ENCODE measurements at regions of chr7 and their contacts with region 1.

Region 1: DNA sequence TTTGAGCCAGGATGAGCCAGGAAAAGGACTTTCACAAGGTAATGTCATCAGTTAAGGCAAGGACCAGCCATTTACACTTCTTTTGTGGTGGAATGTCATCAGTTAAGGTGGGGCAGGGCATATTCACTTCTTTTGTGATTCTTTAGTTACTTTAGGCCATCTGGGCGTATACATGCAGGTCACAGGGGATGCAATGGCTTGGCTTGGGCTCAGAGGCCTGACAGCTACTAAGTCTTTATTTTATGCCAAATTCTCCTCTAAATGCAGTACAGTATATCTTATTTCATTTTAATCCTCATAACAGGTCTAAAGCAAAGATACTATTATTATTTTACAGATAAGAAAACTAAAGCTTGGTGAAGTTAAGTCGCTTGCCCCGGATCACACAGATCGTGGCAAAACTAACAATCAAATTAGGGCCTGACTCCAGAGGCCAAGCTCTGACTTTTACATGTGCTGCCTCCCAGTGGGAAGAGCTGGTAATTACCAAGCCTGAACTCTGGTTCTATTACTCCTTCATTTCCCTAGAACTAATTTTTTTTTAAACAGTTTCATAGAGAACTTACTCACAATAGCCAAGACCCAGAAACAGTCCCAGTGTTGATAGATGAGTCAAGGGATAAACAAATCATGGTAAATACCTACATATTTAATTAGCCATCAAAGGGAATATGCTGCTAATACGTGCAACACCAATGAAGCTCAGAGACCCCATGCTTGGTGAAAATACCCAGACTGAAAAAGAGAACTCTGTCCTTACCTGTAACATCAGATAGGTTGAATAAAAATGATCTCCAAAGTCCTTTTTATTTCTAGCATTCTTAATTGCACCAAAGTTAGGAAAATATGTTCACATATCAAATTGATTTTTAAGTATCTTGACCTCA is 35.4 kb downstream of the C7orf25 start:
- DNase-seq: peak; percentile 67
- ATAC-seq: peak; percentile 60
- H3K4me3 Mint-ChIP-seq: no peak overlapping the region
- H3K27ac Mint-ChIP-seq: no peak overlapping the region
- H3K4me1 Mint-ChIP-seq: no peaks in the 10 kb centered on the region
- H3K27me3 Mint-ChIP-seq: peaks cover 2% of the 10 kb centered on the region

Region 2: DNA sequence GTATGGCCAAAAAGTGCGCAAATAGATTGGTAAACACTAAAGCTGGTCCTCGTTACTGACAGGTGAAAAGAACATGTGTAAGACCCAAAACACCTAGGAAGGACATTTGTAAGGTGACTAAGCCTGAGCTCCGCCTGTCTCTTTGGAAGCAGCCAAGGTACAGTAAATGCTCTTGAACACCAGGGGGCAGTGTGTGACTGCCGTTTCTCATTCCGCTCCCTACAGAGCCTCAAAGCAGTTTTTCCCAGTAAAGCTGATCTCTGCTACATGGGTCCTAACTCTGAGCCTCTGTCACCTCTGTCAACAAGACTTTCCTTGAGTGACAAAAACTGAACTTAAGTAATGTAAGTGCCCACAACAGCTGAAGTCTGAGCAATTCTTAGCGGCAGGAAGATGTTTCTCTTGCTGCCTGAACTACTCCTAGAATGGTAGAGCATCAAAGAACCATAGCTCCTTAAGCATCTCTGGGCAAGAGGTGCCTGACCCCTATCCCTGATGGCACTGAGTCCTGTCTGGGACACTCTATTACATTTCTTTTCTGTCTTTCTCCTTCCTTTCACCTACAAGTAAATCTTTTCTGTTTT is 935.6 kb before region 1 on chr7:
- CTCF ChIA-PET with region 1: interaction called, 16 read pairs
- DNase-seq: peak; percentile 63
- ATAC-seq: peak; percentile 73
- H3K4me3 Mint-ChIP-seq: no peak overlapping the region
- H3K27ac Mint-ChIP-seq: no peak overlapping the region
- H3K4me1 Mint-ChIP-seq: peaks cover 9% of the 10 kb centered on the region
- H3K27me3 Mint-ChIP-seq: peaks cover 19% of the 10 kb centered on the region